ENCODE measurements at regions of chr6 and their contacts with region 1.

Region 1: GRCh38 chr6:112155886-112156285 is 68.5 kb downstream of the FAM229B start:
- DNase-seq: no peak
- H3K4me3 ChIP-seq: no peak overlapping the region
- CTCF ChIP-seq: no peak

Region 2: GRCh38 chr6:112100561-112100960 is 55.3 kb before region 1 on chr6:
- in situ Hi-C with region 1: no loop called
- DNase-seq: no peak
- H3K4me3 ChIP-seq: no peak overlapping the region
- CTCF ChIP-seq: no peak

Region 3: GRCh38 chr6:112117554-112117953 is 38.3 kb before region 1 on chr6:
- in situ Hi-C with region 1: loop called (anchors 5 kb)
- DNase-seq: no peak
- H3K4me3 ChIP-seq: no peak overlapping the region
- CTCF ChIP-seq: no peak

Region 4: GRCh38 chr6:112372226-112372806 is 216.4 kb after region 1 on chr6:
- in situ Hi-C with region 1: no loop called
- DNase-seq: peak; percentile 11
- H3K4me3 ChIP-seq: no peak overlapping the region
- CTCF ChIP-seq: peak; percentile 62